Psoas muscle (tissue), 8 donors: ENCODE measurements at regions of chr3 and their contacts with region 1.

Region 1: GRCh38 chr3:180912304-180913296 is at the start of gene FXR1:
- DNase-seq: peak; percentile 89 to 94
- ATAC-seq: peak; percentile 93 to 97 (median 94)
- H3K4me3 ChIP-seq: peak within 1 kb of the TSS; percentile 80
- H3K27ac ChIP-seq: peak within 1 kb of the TSS; percentile 96
- H3K4me1 ChIP-seq: peaks cover 38% of the 10 kb centered on the region
- H3K27me3 ChIP-seq: no peaks in the 10 kb centered on the region
- CTCF ChIP-seq: peak; percentile 83
- total RNA-seq, gene FXR1: 636 to 779 (median 715) TPM

Region 2: GRCh38 chr3:180180795-180181194 is 731.8 kb before region 1 on chr3:
- intact Hi-C with region 1: no loop called
- DNase-seq: no peak
- ATAC-seq: no peak
- H3K4me3 ChIP-seq: no peak overlapping the region
- H3K27ac ChIP-seq: no peak overlapping the region
- H3K4me1 ChIP-seq: no peaks in the 10 kb centered on the region
- H3K27me3 ChIP-seq: no peaks in the 10 kb centered on the region
- CTCF ChIP-seq: no peak

Region 3: GRCh38 chr3:180802837-180803236 is 109.8 kb before region 1 on chr3:
- intact Hi-C with region 1: loop called in 1 of 2 experiments (anchors 5 kb)
- DNase-seq: no peak
- ATAC-seq: peak in 3 of 4 donors; percentile 48 to 80 (median 68)
- H3K4me3 ChIP-seq: no peak overlapping the region
- H3K27ac ChIP-seq: no peak overlapping the region
- H3K4me1 ChIP-seq: peaks cover 12% of the 10 kb centered on the region
- H3K27me3 ChIP-seq: no peaks in the 10 kb centered on the region
- CTCF ChIP-seq: peak; percentile 65

Region 4: DNA sequence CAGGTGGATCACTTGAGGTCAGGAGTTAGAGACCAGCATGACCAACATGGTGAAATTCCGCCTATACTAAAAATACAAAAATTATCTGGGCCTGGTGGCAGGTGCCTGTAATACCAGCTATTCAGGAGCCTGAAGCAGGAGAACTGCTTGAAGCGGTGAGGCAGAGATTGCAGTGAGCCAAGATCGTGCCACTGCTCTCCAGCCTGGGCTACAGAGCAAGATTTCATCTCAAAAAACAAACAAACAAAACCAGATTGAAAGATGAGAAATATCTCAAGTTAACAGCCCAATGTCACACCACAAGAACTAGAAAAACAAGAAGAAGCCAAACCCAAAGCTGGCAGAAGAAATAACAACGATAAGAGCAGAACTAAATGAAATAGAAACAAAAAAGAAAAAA is 53.6 kb before region 1 on chr3:
- intact Hi-C with region 1: no loop called
- DNase-seq: no peak
- ATAC-seq: no peak
- H3K4me3 ChIP-seq: no peak overlapping the region
- H3K27ac ChIP-seq: no peak overlapping the region
- H3K4me1 ChIP-seq: no peaks in the 10 kb centered on the region
- H3K27me3 ChIP-seq: no peaks in the 10 kb centered on the region
- CTCF ChIP-seq: no peak

Region 5: GRCh38 chr3:180870008-180870699 is 42.4 kb before region 1 on chr3:
- intact Hi-C with region 1: loop called (anchors 2 to 5 kb)
- DNase-seq: peak; percentile 49 to 79
- ATAC-seq: peak; percentile 65 to 78 (median 71)
- H3K4me3 ChIP-seq: peak overlapping the region; percentile 62
- H3K27ac ChIP-seq: peak overlapping the region; percentile 81
- H3K4me1 ChIP-seq: peaks cover 17% of the 10 kb centered on the region
- H3K27me3 ChIP-seq: no peaks in the 10 kb centered on the region
- CTCF ChIP-seq: no peak

Region 6: DNA sequence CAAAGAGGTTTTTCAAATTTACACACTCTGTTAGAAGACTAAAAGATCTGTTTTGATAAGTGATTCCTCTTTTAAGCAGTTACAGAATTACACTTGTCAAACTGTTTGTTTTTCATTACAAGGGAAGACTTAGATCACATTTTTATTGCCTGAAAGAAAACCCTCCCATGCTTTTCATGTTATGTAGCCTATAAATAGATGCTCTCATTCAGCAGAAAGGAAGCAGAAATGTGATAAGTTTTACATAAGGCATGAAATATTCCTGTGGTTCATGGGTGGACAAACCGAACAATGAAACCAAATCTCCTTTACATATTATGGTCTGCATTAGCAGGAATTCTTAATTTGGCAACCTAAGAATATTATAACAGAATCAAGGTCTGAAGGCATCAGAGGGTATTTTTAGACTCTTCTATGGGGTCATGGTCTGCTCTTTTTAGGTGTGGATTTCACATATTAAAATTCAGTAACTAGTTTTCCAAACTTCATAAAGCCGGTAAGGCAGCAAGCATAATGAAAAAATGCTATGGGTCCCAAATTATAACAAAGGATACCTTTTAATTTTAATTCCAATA is 37.4 kb before region 1 on chr3:
- intact Hi-C with region 1: loop called (anchors 2 to 5 kb)
- DNase-seq: no peak
- ATAC-seq: peak; percentile 16 to 60 (median 42)
- H3K4me3 ChIP-seq: no peak overlapping the region
- H3K27ac ChIP-seq: peak overlapping the region; percentile 81
- H3K4me1 ChIP-seq: peaks cover 17% of the 10 kb centered on the region
- H3K27me3 ChIP-seq: no peaks in the 10 kb centered on the region
- CTCF ChIP-seq: no peak

Region 7: GRCh38 chr3:180989291-180990163 is 76.9 kb after region 1 on chr3 and contains the start of gene DNAJC19:
- intact Hi-C with region 1: loop called (anchors 2 to 5 kb)
- DNase-seq: peak; percentile 90 to 95
- ATAC-seq: peak; percentile 91 to 97 (median 96)
- H3K4me3 ChIP-seq: peak within 1 kb of the TSS; percentile 84
- H3K27ac ChIP-seq: peak within 1 kb of the TSS; percentile 89
- H3K4me1 ChIP-seq: peaks cover 13% of the 10 kb centered on the region
- H3K27me3 ChIP-seq: no peaks in the 10 kb centered on the region
- CTCF ChIP-seq: no peak
- total RNA-seq, gene DNAJC19: 61.1 to 90.3 (median 76.4) TPM